ENCODE measurements at regions of chr10 and their contacts with region 1.

Region 1: DNA sequence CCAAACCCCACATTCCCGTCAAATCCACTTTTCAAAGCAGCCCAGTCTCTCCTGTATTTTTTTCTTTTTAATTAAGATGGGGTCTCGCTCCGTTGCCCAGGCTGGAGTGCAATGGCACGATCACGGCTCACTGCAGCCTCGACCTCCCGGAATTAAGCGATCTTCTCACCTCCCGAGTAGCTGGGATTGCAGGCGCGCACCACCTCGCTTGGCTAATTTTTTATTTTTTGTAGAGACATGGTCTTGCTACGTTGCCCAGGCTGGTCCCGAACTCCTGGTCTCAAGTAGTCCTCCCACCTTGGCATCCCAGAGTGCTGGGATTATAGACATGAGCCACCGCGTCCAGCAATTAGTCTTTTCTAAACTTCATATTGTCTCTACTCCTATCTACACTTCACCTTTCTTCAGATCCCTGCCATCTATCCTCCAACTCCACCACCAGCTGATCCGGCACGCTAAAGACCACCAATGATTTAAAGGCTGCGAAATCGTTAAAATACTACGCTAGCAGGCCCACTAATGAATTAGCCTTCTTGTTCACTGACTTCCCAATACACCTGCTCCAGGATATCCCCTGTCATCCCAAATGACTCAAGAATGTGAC is 525 bp upstream of the CHUK start:
- DNase-seq: no peak
- H3K4me3 ChIP-seq: peak overlapping the region; percentile 61 to 99 (median 90)
- H3K27ac ChIP-seq: peak overlapping the region in 56 of 59 donors; percentile 6 to 90 (median 75)
- H3K27me3 ChIP-seq: no peaks in the 10 kb centered on the region
- CTCF ChIP-seq: peak in 4 of 56 donors; percentile 0 to 4 (median 2)

Region 2: DNA sequence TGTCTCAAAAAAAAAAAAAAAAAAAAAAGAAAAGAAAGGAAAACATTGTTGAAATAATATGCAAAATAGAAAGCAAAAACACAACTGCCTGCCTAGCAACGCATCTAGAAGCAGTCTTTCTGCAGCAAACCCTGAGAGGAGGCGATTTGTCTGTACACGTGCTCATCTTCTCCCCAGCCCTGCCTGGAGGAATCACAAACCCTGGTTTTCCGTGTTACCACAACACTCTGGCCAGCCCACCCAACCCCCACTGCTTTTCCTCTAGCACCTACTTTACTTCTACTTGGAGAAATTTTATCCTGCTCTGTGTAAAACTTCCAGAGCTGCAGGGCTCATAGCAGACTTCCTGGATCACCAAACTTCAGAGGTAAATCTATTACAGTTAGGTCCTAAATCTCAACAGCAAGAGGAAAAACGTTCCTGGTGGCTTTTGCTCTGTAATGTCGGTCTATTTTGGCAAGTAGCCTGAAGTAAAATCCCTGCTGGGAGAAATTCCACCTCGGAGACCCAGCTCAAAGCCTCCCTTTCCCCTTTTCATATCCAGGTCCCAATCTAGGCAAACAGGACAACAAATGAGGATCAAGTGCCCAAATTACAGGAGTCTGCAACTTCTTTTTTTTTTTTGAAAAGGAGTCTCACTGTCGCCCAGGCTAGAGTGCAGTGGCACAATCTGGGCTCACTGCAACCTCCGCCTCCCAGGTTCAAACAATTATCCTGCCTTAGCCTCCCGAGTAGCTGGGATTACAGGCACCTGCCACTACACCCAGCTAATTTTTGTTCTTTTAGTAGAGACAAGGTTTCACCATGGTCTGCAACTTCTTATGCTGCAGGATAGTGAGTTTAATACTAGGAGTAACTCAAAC is 311.7 kb before region 1 on chr10:
- intact Hi-C with region 1: no loop called
- DNase-seq: peak in 2 of 10 donors; percentile 13 to 36
- H3K4me3 ChIP-seq: peak overlapping the region in 53 of 59 donors; percentile 3 to 56 (median 37)
- H3K27ac ChIP-seq: peak overlapping the region in 16 of 59 donors; percentile 5 to 62 (median 36)
- H3K27me3 ChIP-seq: no peaks in the 10 kb centered on the region
- CTCF ChIP-seq: no peak

Region 3: DNA sequence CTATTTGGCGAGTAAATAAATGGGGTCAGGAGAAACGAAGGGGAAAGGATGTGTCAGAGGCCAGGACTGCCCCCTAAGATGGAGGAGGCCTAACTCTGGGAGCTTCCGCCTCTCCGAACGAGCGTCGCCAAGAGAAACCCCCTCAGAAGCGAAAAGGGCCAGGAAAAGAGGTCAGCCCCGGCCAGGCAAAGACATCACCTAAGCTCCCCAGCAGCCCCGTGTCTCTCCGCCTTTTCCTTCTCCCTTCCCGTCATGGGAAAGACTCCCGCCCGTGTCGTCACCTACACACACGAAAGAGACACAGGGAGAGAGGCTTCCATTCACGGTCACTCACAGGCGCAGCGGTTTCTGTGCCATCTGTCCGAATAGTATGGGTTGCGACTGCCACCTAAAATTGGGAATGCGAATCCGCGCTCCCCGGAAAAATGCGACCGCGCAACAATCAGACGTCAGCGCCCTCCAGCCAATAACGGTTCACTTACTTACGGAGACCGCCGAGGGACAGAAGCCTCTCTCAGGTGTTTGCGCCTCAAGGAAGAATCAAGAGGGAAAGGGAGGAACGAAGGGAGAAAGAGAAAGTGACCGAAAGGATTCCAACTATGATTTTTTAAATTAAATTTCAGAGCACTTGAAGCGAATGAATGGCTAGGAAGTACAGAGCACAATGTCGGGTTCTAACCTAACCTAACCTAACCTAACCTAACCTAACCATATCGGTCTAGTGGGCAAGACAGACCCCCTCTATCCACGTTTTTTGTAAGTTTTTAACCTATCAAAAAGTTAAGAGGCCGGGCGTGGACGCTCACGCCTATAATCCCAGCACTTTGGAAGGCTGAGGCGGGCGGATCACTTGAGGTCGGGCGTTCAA is 37.5 kb after region 1 on chr10 and contains the start of gene CWF19L1:
- intact Hi-C with region 1: loop called in 1 of 2 experiments (anchors 2 kb)
- DNase-seq: peak; percentile 75 to 92 (median 87)
- H3K4me3 ChIP-seq: peak within 1 kb of the TSS; percentile 67 to 100 (median 96)
- H3K27ac ChIP-seq: peak within 1 kb of the TSS in 56 of 59 donors; percentile 32 to 93 (median 74)
- H3K27me3 ChIP-seq: no peaks in the 10 kb centered on the region
- CTCF ChIP-seq: peak in 23 of 56 donors; percentile 8 to 48 (median 21)
- total RNA-seq, gene CWF19L1: 15.0 to 36.9 (median 24.6) TPM

Measured in dorsolateral prefrontal cortex (tissue), 120 donors.